Endothelial cell of umbilical vein (primary cell): ENCODE measurements at regions of chr9 and their contacts with region 1.

Region 1: GRCh38 chr9:15306757-15307534 is at the start of gene TTC39B:
- DNase-seq: peak; percentile 91
- H3K4me3 ChIP-seq: peak within 1 kb of the TSS; percentile 57 to 63 (median 59)
- H3K27ac ChIP-seq: peak within 1 kb of the TSS; percentile 14
- H3K4me1 ChIP-seq: peaks cover 4% of the 10 kb centered on the region
- H3K27me3 ChIP-seq: no peaks in the 10 kb centered on the region
- CTCF ChIP-seq: peak in 1 of 2 donors; percentile 2
- POLR2A ChIP-seq: peak; percentile 69
- total RNA-seq, gene TTC39B: 5.4 and 6.8 TPM in 2 replicates

Region 2: DNA sequence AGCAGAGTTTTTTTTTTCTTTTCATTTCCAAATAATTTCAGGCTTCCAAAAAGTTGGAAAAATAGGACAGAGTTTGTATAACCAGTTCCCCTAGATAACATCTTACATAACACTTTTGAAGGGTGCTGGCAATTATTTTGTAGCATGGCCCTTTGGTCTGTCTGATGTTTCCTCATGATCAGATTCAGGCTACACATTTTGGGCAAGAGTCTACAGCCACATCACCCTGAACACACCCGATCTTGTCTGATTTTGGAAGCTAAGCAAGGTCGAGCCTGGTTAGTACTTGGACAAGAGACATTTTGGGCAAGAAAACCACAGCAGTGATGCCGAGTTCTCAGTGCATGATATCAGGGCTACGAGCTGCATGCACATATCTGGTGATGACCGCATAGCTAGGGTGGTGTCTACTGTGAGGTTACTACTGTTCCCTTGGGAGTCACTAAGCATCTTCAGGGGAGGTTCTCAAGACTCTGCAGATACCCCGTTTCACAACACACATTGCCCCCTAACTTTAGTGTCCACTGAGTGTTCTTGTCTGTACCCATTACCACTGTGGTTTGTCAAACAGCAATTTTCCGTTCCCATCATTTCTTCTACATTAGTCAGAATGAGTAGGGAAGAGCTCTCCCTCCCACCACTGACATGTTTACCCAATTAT is 86.2 kb before region 1 on chr9:
- CTCF ChIA-PET with region 1: no interaction called
- POLR2A ChIA-PET with region 1: no interaction called
- dilution Hi-C with region 1: no loop called
- intact Hi-C with region 1: no loop called
- DNase-seq: no peak
- H3K4me3 ChIP-seq: no peak overlapping the region
- H3K27ac ChIP-seq: no peak overlapping the region
- H3K4me1 ChIP-seq: no peaks in the 10 kb centered on the region
- H3K27me3 ChIP-seq: no peaks in the 10 kb centered on the region
- CTCF ChIP-seq: no peak
- POLR2A ChIP-seq: no peak

Region 3: GRCh38 chr9:15231788-15232635 is 74.9 kb before region 1 on chr9:
- CTCF ChIA-PET with region 1: no interaction called
- POLR2A ChIA-PET with region 1: no interaction called
- dilution Hi-C with region 1: no loop called
- intact Hi-C with region 1: loop called (anchors 1 kb)
- DNase-seq: peak; percentile 40
- H3K4me3 ChIP-seq: no peak overlapping the region
- H3K27ac ChIP-seq: no peak overlapping the region
- H3K4me1 ChIP-seq: no peaks in the 10 kb centered on the region
- H3K27me3 ChIP-seq: no peaks in the 10 kb centered on the region
- CTCF ChIP-seq: peak; percentile 59 to 64
- POLR2A ChIP-seq: no peak

Region 4: GRCh38 chr9:15277400-15278090 is 29.4 kb before region 1 on chr9:
- CTCF ChIA-PET with region 1: interaction called, 5 read pairs
- POLR2A ChIA-PET with region 1: no interaction called
- dilution Hi-C with region 1: no loop called
- intact Hi-C with region 1: loop called (anchors 1 kb)
- DNase-seq: peak; percentile 48
- H3K4me3 ChIP-seq: no peak overlapping the region
- H3K27ac ChIP-seq: no peak overlapping the region
- H3K4me1 ChIP-seq: no peaks in the 10 kb centered on the region
- H3K27me3 ChIP-seq: no peaks in the 10 kb centered on the region
- CTCF ChIP-seq: peak in 1 of 2 donors; percentile 19
- POLR2A ChIP-seq: no peak

Region 5: DNA sequence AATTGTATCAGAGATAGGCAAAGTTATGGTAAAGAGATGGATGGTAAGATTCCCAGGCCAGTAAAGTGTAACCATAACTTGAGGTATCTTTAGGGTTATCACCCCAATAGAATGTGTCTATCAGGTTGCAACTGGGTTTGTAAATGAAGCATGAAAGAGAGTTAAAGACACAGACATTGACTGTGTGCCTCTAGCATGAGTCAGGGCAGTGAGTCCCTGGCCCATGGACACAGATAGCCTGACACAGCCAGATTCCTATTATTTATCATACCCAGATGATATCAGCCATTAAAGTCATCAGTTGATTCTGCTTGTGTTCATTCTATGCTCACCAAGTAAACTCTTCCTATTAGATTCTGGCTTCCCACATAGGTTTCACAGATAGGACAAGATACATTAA is 82.2 kb after region 1 on chr9:
- CTCF ChIA-PET with region 1: no interaction called
- POLR2A ChIA-PET with region 1: no interaction called
- dilution Hi-C with region 1: no loop called
- intact Hi-C with region 1: no loop called
- DNase-seq: no peak
- H3K4me3 ChIP-seq: no peak overlapping the region
- H3K27ac ChIP-seq: no peak overlapping the region
- H3K4me1 ChIP-seq: no peaks in the 10 kb centered on the region
- H3K27me3 ChIP-seq: peaks cover 0 to 1% of the 10 kb centered on the region in 2 experiments
- CTCF ChIP-seq: no peak
- POLR2A ChIP-seq: no peak

Region 6: DNA sequence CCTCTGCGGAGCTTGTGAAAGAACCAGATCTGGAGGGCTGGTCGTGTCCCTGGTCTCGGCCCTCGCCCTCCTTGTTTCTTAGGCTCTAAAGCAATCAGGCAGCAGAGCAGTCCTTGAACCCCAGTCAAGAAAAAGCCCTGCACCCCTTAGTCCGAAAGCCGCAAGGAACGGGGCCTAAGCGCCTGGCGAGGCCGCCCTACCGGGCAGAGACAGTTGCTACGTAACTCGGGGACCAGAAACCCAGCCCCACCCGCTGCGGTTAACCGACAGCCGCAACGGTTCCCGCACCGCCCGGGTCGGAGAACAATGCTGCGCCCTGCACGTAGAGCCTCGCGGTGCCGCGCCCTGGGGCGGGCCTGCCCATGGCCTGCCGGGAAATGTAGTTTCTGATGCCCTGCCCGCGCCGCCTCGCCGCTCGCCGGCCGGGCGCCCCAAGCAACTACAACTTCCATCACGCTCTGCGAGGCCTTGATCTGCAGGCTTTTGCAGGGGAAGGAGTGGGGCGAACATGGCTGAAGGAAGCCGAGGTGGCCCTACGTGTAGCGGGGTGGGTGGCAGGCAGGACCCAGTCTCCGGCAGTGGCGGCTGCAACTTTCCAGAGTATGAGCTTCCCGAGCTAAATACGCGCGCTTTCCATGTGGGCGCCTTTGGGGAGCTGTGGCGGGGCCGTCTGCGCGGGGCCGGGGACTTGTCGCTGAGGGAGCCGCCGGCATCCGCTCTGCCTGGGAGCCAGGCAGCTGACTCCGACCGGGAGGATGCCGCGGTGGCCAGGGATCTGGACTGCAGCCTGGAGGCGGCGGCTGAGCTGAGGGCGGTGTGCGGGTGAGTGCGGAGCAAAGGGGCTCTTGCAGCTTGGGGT is 115.7 kb after region 1 on chr9 and contains the start of gene SNAPC3:
- CTCF ChIA-PET with region 1: no interaction called
- POLR2A ChIA-PET with region 1: no interaction called
- dilution Hi-C with region 1: no loop called
- intact Hi-C with region 1: loop called (anchors 1 kb)
- DNase-seq: peak; percentile 98
- H3K4me3 ChIP-seq: peak within 1 kb of the TSS; percentile 80 to 100 (median 94)
- H3K27ac ChIP-seq: peak within 1 kb of the TSS; percentile 80
- H3K4me1 ChIP-seq: peaks cover 11% of the 10 kb centered on the region
- H3K27me3 ChIP-seq: no peaks in the 10 kb centered on the region
- CTCF ChIP-seq: no peak
- POLR2A ChIP-seq: peak; percentile 88
- total RNA-seq, gene SNAPC3: 30.9 and 32.6 TPM in 2 replicates

Region 7: GRCh38 chr9:15498246-15498995 is 191.5 kb after region 1 on chr9:
- CTCF ChIA-PET with region 1: no interaction called
- POLR2A ChIA-PET with region 1: no interaction called
- dilution Hi-C with region 1: no loop called
- intact Hi-C with region 1: no loop called
- DNase-seq: no peak
- H3K4me3 ChIP-seq: no peak overlapping the region
- H3K27ac ChIP-seq: no peak overlapping the region
- H3K4me1 ChIP-seq: peaks cover 7% of the 10 kb centered on the region
- H3K27me3 ChIP-seq: no peaks in the 10 kb centered on the region
- CTCF ChIP-seq: no peak
- POLR2A ChIP-seq: no peak

Region 8: DNA sequence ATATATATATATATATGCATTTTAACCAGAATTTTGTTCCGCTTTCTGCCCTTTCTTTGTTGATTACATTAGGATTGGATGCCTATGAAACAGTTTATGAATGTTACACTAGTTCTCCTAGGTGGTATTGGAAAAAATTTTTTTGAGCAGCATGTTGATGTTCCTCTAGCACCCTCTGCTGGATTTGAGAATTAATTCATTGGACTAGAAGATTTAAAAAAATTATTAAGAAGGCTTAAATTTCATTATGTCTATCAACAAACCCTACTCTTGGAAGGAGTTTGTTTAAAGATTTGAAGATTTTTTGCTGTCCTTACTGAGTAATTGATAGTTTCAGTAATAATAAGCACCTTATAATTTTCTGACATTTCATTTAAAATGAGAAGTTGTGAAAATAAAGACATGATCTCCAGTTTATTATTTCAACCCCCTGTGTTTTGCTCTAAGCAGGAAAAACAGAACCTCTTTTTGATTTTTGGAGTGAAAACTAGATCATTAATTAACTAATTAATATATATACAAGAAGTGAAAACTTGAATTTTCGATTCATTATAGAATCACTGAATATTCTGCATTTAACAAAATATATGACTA is 335.5 kb after region 1 on chr9:
- CTCF ChIA-PET with region 1: no interaction called
- POLR2A ChIA-PET with region 1: no interaction called
- dilution Hi-C with region 1: no loop called
- intact Hi-C with region 1: loop called (anchors 1 kb)
- DNase-seq: peak; percentile 59
- H3K4me3 ChIP-seq: no peak overlapping the region
- H3K27ac ChIP-seq: no peak overlapping the region
- H3K4me1 ChIP-seq: peaks cover 8% of the 10 kb centered on the region
- H3K27me3 ChIP-seq: no peaks in the 10 kb centered on the region
- CTCF ChIP-seq: peak; percentile 24 to 25
- POLR2A ChIP-seq: no peak